Cardiac septum (tissue), 1 donor: ENCODE measurements at regions of chr22 and their contacts with region 1.

Region 1: DNA sequence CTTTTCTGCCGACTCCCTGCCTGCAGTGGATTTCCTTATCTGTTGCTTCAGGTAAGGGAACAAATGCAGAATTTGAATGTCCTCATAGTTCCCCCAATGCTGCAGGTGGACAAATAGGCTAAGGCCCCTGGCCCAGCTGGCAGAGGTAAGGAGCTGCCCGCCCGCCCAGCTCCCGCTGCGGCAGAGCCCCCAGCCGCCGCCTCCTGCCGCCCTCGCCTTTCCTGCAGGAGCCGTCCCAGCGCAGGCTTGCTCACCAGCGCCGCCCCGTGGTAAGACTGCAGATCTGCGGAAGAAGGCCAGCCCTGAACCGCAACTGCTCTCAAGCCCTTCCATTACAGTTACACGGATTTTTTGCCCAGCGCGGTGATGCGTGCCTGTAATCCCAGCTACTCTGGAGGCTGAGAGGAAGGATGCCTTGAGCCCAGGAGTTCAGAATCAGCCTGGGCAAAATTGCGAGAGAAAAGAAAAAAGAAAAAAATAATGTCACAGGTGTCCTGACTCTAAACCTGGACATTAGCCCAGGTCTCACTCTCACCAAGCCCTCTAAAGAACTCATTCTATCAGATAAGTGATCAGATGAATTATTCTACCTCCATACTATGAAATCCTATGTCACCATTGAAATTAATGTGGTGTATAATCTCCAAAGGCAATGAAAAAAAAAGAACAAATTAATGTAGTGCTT is 51.2 kb upstream of the EMID1 start:
- DNase-seq: peak; percentile 94

Region 2: DNA sequence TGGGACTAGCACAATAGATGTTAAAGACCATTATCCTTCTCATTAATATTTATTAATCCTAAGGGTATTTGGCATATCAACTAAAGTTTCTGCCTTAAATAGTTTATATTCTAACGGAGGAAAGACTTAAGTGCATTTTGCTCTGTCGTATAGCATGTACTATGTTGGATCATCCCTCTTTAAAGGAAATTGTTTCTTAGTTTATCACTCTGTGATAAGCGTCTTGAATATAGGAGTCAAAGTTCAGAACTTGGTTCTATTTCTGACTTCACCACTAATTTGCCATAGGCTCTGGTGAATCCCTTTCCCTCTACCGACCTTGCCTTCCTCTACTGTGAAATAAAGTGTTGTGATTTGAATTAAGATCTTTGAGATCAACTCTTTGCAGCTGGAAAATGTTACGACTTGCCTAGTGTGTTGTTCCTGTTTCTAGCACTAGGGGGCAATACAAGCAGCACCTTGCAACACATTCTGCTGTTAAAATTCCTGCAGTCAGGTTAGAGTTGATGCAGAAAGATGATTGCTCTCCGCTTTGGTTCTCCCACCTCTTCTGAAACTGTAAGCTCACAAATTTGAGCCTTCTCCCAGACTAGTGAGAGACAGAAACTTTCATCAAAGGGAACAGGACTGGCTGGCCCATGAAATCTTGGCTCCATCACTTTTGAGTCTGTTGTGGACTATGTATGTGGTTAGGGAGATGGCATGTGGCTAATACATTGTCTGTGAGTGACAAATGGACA is 299.0 kb before region 1 on chr22:
- intact Hi-C with region 1: loop called (anchors 2 kb)
- DNase-seq: no peak

Region 3: GRCh38 chr22:29072193-29072978 is 82.1 kb before region 1 on chr22:
- intact Hi-C with region 1: loop called (anchors 5 kb)
- DNase-seq: peak; percentile 95